ENCODE measurements at regions of chr19 and their contacts with region 1.

Region 1: DNA sequence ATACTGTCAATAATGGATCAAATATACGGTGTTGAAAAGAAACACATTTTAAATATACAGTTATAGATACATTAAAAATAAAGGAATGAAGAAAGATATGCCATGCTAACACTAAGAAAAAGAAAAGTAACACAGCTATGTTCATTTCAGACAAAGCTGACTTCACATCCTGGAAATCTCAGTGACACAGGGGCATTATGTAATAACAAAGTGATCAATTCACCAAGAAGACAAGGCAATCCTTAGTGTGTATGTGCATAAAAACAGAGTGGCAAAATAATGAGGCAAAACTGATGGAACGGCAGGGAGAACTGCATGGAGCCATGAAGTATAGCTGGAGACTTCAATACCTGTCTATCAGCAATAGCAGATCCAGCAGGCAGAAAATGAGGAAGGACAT is 13.1 kb downstream of the ZNF14 start:
- DNase-seq: peak in 1 of 9 experiments; percentile 27
- ATAC-seq: no peak
- H3K4me3 ChIP-seq: no peak overlapping the region
- H3K4me3 Mint-ChIP-seq: no peak overlapping the region
- H3K27ac ChIP-seq: no peak overlapping the region
- H3K27ac Mint-ChIP-seq: no peak overlapping the region
- H3K4me1 ChIP-seq: no peaks in the 10 kb centered on the region
- H3K4me1 Mint-ChIP-seq: peaks cover 8% of the 10 kb centered on the region
- H3K27me3 ChIP-seq: no peaks in the 10 kb centered on the region
- H3K27me3 Mint-ChIP-seq: no peaks in the 10 kb centered on the region
- CTCF ChIP-seq: no peak

Region 2: GRCh38 chr19:19677579-19677978 is 42.2 kb before region 1 on chr19:
- CTCF ChIA-PET with region 1: no interaction called
- POLR2A ChIA-PET with region 1: no interaction called
- intact Hi-C with region 1: loop called in 1 of 2 experiments (anchors 5 kb)
- DNase-seq: no peak
- ATAC-seq: no peak
- H3K4me3 ChIP-seq: peak overlapping the region in 1 of 2 experiments; percentile 1
- H3K4me3 Mint-ChIP-seq: peak overlapping the region; percentile 15
- H3K27ac ChIP-seq: no peak overlapping the region
- H3K27ac Mint-ChIP-seq: peak overlapping the region; percentile 60
- H3K4me1 ChIP-seq: no peaks in the 10 kb centered on the region
- H3K4me1 Mint-ChIP-seq: peaks cover 27% of the 10 kb centered on the region
- H3K27me3 ChIP-seq: no peaks in the 10 kb centered on the region
- H3K27me3 Mint-ChIP-seq: no peaks in the 10 kb centered on the region
- CTCF ChIP-seq: no peak

Region 3: GRCh38 chr19:20558011-20558410 is 838.2 kb after region 1 on chr19:
- CTCF ChIA-PET with region 1: no interaction called
- POLR2A ChIA-PET with region 1: no interaction called
- intact Hi-C with region 1: loop called in 1 of 2 experiments (anchors 10 kb)
- DNase-seq: no peak
- ATAC-seq: no peak
- H3K4me3 ChIP-seq: no peak overlapping the region
- H3K4me3 Mint-ChIP-seq: no peak overlapping the region
- H3K27ac ChIP-seq: no peak overlapping the region
- H3K27ac Mint-ChIP-seq: no peak overlapping the region
- H3K4me1 ChIP-seq: no peaks in the 10 kb centered on the region
- H3K4me1 Mint-ChIP-seq: peaks cover 24% of the 10 kb centered on the region
- H3K27me3 ChIP-seq: no peaks in the 10 kb centered on the region
- H3K27me3 Mint-ChIP-seq: no peaks in the 10 kb centered on the region
- CTCF ChIP-seq: no peak

Measured in CD8-positive, alpha-beta T cell (primary cell).